GM10248 (cell line): ENCODE measurements at regions of chr10 and their contacts with region 1.

Region 1: DNA sequence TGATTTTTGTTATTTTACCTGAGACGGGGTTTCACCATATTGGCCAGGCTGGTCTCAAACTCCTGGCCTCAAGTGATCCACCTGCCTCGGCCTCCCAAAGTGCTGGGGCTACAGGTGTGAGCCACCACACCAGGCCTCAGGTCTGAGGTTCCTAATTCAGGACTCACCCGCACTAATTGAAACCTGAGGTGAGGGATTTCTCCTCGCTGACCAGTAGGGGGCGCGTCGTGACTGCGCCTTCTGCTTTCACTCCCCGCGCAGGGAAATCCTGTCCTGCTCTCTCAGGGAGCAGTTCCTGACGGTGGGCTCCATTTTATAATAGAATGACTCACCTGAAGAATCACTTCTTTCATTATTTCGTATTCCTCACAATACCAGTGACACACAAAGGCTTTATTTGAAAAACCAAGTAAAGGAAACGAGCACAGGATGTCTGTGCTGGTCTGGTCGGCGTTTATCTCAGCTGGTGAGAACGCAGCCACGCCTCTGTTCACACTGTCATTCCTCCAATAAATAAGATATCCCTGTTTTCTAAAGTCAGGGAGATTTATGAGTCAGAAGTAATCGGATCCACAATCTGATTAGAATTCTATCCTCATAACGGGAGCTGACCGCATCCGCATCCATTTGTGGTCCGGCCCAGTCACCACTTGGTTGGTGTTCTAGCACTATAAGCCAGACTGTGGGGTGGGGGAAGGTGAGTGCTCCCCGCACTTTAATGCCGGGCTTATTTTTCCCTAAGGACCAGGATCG is 35.4 kb downstream of the BAG3 start:
- DNase-seq: peak; percentile 81
- CTCF ChIP-seq: peak; percentile 92

Region 2: GRCh38 chr10:119705434-119705831 is 18.8 kb after region 1 on chr10:
- CTCF ChIA-PET with region 1: interaction called, 27 read pairs
- POLR2A ChIA-PET with region 1: interaction called, 4 read pairs
- DNase-seq: peak; percentile 48
- CTCF ChIP-seq: no peak

Region 3: GRCh38 chr10:119725828-119726675 is 39.4 kb after region 1 on chr10 and contains the start of gene INPP5F:
- CTCF ChIA-PET with region 1: interaction called, 40 read pairs
- POLR2A ChIA-PET with region 1: interaction called, 5 read pairs
- DNase-seq: peak; percentile 100
- CTCF ChIP-seq: peak; percentile 27

Region 4: GRCh38 chr10:119742947-119743648 is 56.5 kb after region 1 on chr10:
- CTCF ChIA-PET with region 1: interaction called, 22 read pairs
- POLR2A ChIA-PET with region 1: no interaction called
- DNase-seq: no peak
- CTCF ChIP-seq: no peak

Region 5: DNA sequence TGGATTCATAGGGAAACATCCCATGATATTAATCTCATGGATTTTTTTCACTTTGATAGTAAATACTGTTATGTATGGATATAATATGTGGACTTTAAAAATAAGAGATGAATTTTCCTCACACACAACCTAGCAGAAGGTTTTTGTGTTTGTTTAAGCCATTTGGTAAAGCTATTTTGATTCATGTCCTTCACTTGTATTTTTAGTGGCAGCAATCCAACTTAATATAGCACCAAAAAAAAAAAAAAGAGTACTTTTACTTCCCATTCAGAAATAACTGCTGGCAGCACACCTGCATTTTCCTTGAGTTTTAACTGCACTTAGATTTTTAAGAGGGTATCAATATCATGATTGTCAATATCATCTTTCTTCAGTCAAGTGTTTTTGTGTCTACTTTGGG is 126.1 kb after region 1 on chr10:
- CTCF ChIA-PET with region 1: interaction called, 10 read pairs
- POLR2A ChIA-PET with region 1: no interaction called
- DNase-seq: no peak
- CTCF ChIP-seq: no peak

Region 6: DNA sequence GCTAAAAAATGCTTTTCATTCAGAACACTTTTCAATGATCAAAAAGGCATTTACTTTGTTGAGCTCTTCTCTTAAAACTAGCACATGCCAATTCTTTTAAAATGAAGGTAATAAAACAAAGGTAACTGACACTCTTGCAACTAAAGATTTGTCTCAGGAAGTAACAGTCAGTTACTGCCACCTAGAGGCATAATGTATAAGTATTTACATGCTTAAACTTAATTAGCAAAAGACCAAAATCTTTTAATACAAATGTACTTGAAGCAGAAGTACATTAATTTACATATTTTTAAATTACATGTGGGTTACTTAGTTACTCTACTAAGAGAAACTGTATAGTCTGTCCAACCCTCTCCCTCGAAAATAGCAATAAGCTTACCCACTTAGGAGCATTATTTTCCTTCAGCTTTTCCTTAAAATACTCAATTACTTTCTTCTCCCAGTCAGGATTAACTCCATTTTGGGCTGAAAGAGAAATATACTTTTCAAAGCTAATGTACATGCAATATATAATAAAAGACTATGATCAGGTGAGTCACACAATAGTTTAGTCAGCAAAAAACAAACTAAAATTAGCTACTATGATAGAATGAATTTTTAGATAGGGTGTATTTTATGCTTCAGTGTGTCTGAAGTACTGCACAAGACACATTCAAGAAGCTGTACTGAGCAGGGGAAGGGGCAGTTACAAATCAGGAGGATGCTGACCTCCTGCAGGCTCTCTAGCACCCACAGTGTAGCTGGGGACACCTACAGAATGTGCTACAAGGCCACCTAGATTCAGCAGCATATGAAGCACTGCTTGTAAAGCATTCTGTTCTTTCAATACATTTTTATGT is 173.0 kb after region 1 on chr10:
- CTCF ChIA-PET with region 1: interaction called, 145 read pairs
- POLR2A ChIA-PET with region 1: no interaction called
- DNase-seq: peak; percentile 29
- CTCF ChIP-seq: peak; percentile 55

Region 7: DNA sequence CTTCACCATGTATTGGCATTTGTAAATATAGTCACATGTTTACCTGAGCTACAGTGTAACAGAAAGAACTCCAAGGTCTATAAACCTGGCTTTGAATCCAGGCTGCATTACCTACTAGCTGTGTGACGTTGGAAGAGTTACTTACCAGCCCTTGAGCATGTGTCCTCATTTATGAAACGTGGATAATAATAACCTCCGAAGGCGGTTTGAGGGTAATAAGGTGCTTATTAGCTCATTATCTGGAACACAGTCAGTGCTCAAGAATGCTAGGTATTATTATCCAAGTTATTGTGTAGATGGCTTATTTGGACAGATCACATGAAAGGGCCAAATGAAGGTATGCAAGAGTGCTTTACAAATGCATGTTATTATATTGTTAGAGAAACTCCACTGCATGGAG is 270.8 kb after region 1 on chr10:
- CTCF ChIA-PET with region 1: no interaction called
- POLR2A ChIA-PET with region 1: no interaction called
- DNase-seq: no peak
- CTCF ChIP-seq: no peak